IMR-90 (cell line): ENCODE measurements at regions of chr17 and their contacts with region 1.

Region 1: GRCh38 chr17:67942810-67943209 is 53.5 kb downstream of the C17orf58 start:
- DNase-seq: peak; percentile 8
- ATAC-seq: peak; percentile 35; the same call in 1 of the 2 replicates
- H3K4me3 ChIP-seq: no peak overlapping the region
- H3K27ac ChIP-seq: no peak overlapping the region
- H3K4me1 ChIP-seq: no peaks in the 10 kb centered on the region
- H3K27me3 ChIP-seq: no peaks in the 10 kb centered on the region
- CTCF ChIP-seq: peak; percentile 41
- POLR2A ChIP-seq: no peak
- RAD21 ChIP-seq: no peak

Region 2: DNA sequence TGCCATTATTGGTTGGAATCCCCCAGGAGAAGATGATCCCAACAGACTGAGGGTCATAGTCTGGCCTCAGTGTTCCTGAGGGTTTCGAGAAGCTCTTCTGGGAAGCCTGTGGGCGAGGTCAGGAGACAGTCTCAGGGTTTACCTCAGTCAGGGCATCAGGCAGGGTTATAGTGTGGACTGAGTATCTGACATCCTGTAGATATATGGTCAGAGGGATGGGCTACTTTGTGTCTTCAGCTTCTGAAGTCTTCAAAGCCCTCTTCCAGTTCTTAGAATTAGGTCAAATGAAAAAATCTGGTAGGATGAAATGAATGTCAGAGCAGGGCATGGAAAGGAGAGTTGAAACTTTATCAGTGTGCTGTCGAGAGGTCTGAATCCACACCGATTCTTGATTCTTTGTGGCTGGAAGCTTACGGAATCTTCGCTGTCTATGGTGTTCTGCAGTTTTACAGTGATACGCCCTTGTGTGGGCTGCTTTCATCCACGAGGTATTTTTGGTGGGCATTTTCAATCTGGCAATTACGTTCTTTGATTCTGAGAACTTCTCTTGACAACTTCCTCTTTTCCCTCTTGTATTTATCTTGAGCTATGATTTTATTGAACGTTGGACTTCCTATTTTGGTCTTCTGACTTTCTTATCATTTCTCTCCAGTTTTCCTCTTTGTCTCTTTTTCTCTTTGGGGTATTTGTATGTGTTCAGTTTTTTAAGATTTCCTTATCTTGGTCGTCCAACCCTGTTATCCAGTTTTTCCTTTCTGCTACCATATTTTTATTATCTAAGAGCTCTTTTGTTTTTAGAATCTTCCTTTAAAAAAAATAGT is 87.1 kb before region 1 on chr17:
- CTCF ChIA-PET with region 1: no interaction called
- POLR2A ChIA-PET with region 1: no interaction called
- dilution Hi-C with region 1: no loop called
- in situ Hi-C with region 1: no loop called
- intact Hi-C with region 1: no loop called
- DNase-seq: no peak
- ATAC-seq: no peak
- H3K4me3 ChIP-seq: no peak overlapping the region
- H3K27ac ChIP-seq: no peak overlapping the region
- H3K4me1 ChIP-seq: peaks cover 2% of the 10 kb centered on the region
- H3K27me3 ChIP-seq: no peaks in the 10 kb centered on the region
- CTCF ChIP-seq: no peak
- POLR2A ChIP-seq: no peak
- RAD21 ChIP-seq: no peak

Region 3: DNA sequence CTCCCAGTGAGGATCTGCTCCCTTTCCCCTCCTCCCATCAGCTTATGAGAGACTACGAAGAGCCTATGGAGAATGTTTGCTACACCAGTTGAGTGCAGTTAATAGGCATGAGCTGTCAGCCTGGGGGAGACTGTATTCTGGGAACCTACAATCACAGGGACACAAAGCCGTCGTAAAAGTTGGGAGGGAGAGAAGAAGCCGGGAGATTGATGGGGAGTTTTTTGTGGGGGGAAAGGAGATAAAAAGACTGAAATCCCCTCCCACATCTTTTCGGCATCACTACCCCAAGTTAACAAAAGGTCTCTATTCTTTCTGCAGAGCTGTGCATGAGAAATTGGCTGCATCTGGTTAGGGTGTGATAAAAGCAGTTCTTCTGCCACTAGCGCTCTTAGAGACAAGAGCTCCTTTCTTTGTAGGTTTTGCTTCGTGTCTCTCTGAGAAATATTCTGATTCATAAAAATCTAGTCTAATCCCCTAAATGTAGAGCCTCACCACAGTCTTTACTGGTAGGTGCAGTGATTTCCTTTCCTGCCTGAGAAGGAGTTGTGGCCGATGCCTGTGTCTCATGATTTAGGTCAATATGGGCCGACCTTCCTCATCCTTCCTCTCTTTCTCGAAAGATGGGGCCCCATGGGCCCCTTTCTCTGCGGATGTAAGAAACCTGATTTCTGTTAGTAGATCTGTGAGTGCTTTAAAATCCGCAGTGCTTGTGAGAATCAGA is 40.1 kb before region 1 on chr17:
- CTCF ChIA-PET with region 1: no interaction called
- POLR2A ChIA-PET with region 1: no interaction called
- dilution Hi-C with region 1: no loop called
- in situ Hi-C with region 1: no loop called
- intact Hi-C with region 1: loop called (anchors 5 kb)
- DNase-seq: no peak
- ATAC-seq: no peak
- H3K4me3 ChIP-seq: no peak overlapping the region
- H3K27ac ChIP-seq: no peak overlapping the region
- H3K4me1 ChIP-seq: no peaks in the 10 kb centered on the region
- H3K27me3 ChIP-seq: no peaks in the 10 kb centered on the region
- CTCF ChIP-seq: no peak
- POLR2A ChIP-seq: no peak
- RAD21 ChIP-seq: no peak

Region 4: GRCh38 chr17:68161644-68162428 is 219.0 kb after region 1 on chr17:
- CTCF ChIA-PET with region 1: no interaction called
- POLR2A ChIA-PET with region 1: interaction called, 11 read pairs
- dilution Hi-C with region 1: no loop called
- in situ Hi-C with region 1: no loop called
- intact Hi-C with region 1: no loop called
- DNase-seq: no peak
- ATAC-seq: no peak
- H3K4me3 ChIP-seq: no peak overlapping the region
- H3K27ac ChIP-seq: no peak overlapping the region
- H3K4me1 ChIP-seq: peaks cover 3% of the 10 kb centered on the region; the same call in 1 of the 2 replicates
- H3K27me3 ChIP-seq: no peaks in the 10 kb centered on the region
- CTCF ChIP-seq: no peak
- POLR2A ChIP-seq: no peak
- RAD21 ChIP-seq: no peak